ENCODE measurements at regions of chr17 and their contacts with region 1.

Region 1: DNA sequence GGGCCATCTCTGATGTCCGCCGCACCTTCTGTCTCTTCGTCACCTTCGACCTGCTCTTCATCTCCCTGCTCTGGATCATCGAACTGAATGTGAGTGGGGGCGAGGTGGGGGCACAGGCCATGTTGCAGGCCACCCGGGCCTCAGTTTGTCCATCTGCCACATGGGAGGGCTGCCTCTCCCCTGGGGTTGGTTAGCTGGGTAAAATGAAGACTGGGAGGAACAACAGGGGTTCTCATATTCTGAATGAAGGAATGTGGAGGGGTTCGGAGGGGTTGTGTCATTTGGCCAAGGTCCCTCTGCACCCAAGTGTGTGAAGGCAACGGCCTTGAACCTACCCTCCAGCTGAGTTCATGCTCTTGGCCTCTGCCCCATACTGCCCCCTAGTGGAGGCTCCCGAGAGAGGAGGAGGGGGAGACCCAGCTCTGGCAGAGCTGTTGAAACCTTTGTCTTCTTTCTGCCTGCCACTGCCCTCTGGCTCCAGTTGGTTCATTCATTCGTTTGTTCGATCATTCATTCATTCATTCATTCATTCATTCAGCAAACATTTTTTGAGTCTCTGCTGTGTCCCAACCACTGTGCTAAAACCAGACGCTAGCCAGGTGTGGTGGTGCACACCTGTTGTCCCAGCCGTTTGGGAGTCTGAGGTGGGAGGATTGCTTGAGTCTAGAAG is 11.4 kb upstream of the TCAP start:
- DNase-seq: peak; percentile 65 to 75 (median 73)
- H3K4me3 ChIP-seq: no peak overlapping the region
- H3K4me3 Mint-ChIP-seq: no peak overlapping the region
- H3K27ac ChIP-seq: no peak overlapping the region
- H3K27ac Mint-ChIP-seq: peak overlapping the region in 3 of 7 donors; percentile 69 to 78 (median 78)
- H3K4me1 ChIP-seq: peaks cover 10% of the 10 kb centered on the region
- H3K4me1 Mint-ChIP-seq: peaks cover 24 to 55% (median 27%) of the 10 kb centered on the region in 4 donors
- H3K27me3 ChIP-seq: no peaks in the 10 kb centered on the region
- H3K27me3 Mint-ChIP-seq: no peaks in the 10 kb centered on the region

Region 2: DNA sequence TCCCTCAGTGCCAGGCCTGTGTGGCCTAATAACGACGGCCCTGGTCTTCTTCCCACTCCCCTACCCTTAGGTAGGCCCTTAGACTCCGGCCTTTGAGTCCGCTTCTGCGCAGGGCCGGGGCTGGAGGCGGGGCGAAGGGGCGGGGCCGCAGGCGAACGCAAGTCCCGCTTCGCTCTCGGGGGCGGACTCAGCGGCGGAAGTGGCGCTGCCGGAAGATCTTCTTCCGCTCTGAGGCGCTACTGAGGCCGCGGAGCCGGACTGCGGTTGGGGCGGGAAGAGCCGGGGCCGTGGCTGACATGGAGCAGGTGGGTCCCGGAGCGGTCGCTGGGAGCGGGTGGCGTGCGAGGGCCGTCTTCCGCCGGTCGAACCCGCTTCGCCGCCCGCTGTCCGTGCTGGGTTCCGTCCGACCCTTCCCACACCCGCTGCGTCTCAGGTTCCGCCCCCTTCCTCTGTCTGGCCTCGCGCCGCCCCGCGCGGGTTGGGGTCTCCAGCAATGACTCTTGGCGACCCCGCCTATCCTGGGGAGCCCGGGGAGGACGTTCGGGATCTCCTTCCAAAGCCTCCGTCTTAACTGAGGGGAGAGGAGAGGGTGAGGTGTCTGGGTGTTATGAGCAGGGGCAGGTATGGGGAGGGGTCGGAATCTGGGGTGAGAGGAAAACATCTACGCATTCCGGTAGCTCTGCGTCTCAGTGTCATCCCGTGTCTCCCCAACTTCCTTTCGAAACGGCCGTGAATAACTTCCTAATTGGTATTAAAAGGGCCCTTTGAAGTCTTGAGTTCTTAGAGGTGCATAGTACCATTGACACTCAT is 16.7 kb before region 1 on chr17 and contains the start of gene STARD3:
- CTCF ChIA-PET with region 1: interaction called, 53 read pairs
- POLR2A ChIA-PET with region 1: interaction called, 4 read pairs
- intact Hi-C with region 1: no loop called
- DNase-seq: peak; percentile 85 to 92 (median 87)
- H3K4me3 ChIP-seq: peak within 1 kb of the TSS; percentile 86 to 88
- H3K4me3 Mint-ChIP-seq: peak within 1 kb of the TSS; percentile 92 to 98 (median 96)
- H3K27ac ChIP-seq: peak within 1 kb of the TSS; percentile 97
- H3K27ac Mint-ChIP-seq: peak within 1 kb of the TSS; percentile 84 to 98 (median 96)
- H3K4me1 ChIP-seq: peaks cover 61% of the 10 kb centered on the region
- H3K4me1 Mint-ChIP-seq: peaks cover 33 to 62% (median 49%) of the 10 kb centered on the region in 4 donors
- H3K27me3 ChIP-seq: no peaks in the 10 kb centered on the region
- H3K27me3 Mint-ChIP-seq: peaks cover 0 to 1% of the 10 kb centered on the region in 2 donors
- total RNA-seq, gene STARD3: 105 to 110 TPM

Region 3: GRCh38 chr17:39643271-39643670 is 10.5 kb before region 1 on chr17:
- CTCF ChIA-PET with region 1: interaction called, 53 read pairs
- POLR2A ChIA-PET with region 1: interaction called, 4 read pairs
- intact Hi-C with region 1: no loop called
- DNase-seq: peak in 1 of 5 donors; percentile 24
- H3K4me3 ChIP-seq: no peak overlapping the region
- H3K4me3 Mint-ChIP-seq: no peak overlapping the region
- H3K27ac ChIP-seq: no peak overlapping the region
- H3K27ac Mint-ChIP-seq: peak overlapping the region in 4 of 7 donors; percentile 42 to 82 (median 52)
- H3K4me1 ChIP-seq: peaks cover 63% of the 10 kb centered on the region
- H3K4me1 Mint-ChIP-seq: peaks cover 35 to 78% (median 51%) of the 10 kb centered on the region in 4 donors
- H3K27me3 ChIP-seq: no peaks in the 10 kb centered on the region
- H3K27me3 Mint-ChIP-seq: no peaks in the 10 kb centered on the region

Region 4: DNA sequence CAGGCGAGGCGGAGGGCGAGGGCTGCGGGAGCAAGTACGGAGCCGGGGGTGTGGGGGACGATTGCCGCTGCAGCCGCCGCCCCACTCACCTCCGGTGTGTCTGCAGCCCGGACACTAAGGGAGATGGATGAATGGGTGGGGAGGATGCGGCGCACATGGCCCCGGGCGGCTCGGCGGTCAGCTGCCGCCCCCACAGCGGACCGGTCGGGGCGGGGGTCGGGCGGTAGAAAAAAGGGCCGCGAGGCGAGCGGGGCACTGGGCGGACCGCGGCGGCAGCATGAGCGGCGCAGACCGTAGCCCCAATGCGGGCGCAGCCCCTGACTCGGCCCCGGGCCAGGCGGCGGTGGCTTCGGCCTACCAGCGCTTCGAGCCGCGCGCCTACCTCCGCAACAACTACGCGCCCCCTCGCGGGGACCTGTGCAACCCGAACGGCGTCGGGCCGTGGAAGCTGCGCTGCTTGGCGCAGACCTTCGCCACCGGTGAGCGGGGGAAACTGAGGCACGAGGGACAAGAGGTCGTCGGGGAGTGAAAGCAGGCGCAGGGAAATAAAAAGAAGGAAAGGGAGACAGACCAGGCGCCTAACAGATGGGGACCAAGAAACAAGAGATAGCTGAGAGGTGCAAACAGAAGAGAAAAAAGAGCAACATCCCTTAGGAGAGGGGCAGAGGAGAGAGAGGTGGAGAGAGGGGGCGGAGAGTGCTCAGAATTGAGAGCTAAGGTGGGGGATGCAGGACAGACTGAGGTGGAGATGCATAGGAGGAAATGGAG is 14.6 kb after region 1 on chr17 and contains the start of gene PNMT:
- CTCF ChIA-PET with region 1: interaction called, 58 read pairs
- POLR2A ChIA-PET with region 1: interaction called, 5 read pairs
- intact Hi-C with region 1: no loop called
- DNase-seq: peak; percentile 57 to 63 (median 61)
- H3K4me3 ChIP-seq: peak within 1 kb of the TSS in 1 of 2 donors; percentile 45
- H3K4me3 Mint-ChIP-seq: peak within 1 kb of the TSS; percentile 60 to 80 (median 72)
- H3K27ac ChIP-seq: no peak within 1 kb of the TSS
- H3K27ac Mint-ChIP-seq: peak within 1 kb of the TSS in 5 of 7 donors; percentile 21 to 80 (median 41)
- H3K4me1 ChIP-seq: peaks cover 12% of the 10 kb centered on the region
- H3K4me1 Mint-ChIP-seq: peaks cover 6 to 24% (median 7%) of the 10 kb centered on the region in 4 donors
- H3K27me3 ChIP-seq: peaks cover 12% of the 10 kb centered on the region
- H3K27me3 Mint-ChIP-seq: peaks cover 4 to 10% of the 10 kb centered on the region in 2 donors
- total RNA-seq, gene PNMT: 0.55 TPM in 1 of 2 experiments, not detected in the other

Region 5: GRCh38 chr17:39676198-39676819 is 22.5 kb after region 1 on chr17:
- CTCF ChIA-PET with region 1: interaction called, 58 read pairs
- POLR2A ChIA-PET with region 1: no interaction called
- intact Hi-C with region 1: no loop called
- DNase-seq: peak; percentile 54 to 72 (median 69)
- H3K4me3 ChIP-seq: no peak overlapping the region
- H3K4me3 Mint-ChIP-seq: peak overlapping the region in 7 of 8 donors; percentile 21 to 77 (median 70)
- H3K27ac ChIP-seq: peak overlapping the region; percentile 6
- H3K27ac Mint-ChIP-seq: peak overlapping the region; percentile 77 to 97 (median 92)
- H3K4me1 ChIP-seq: peaks cover 61% of the 10 kb centered on the region
- H3K4me1 Mint-ChIP-seq: peaks cover 44 to 70% (median 58%) of the 10 kb centered on the region in 4 donors
- H3K27me3 ChIP-seq: no peaks in the 10 kb centered on the region
- H3K27me3 Mint-ChIP-seq: no peaks in the 10 kb centered on the region

Measured in CD4-positive, alpha-beta memory T cell (primary cell).